SK-N-SH (cell line): ENCODE measurements at regions of chr7 and their contacts with region 1.

Region 1: DNA sequence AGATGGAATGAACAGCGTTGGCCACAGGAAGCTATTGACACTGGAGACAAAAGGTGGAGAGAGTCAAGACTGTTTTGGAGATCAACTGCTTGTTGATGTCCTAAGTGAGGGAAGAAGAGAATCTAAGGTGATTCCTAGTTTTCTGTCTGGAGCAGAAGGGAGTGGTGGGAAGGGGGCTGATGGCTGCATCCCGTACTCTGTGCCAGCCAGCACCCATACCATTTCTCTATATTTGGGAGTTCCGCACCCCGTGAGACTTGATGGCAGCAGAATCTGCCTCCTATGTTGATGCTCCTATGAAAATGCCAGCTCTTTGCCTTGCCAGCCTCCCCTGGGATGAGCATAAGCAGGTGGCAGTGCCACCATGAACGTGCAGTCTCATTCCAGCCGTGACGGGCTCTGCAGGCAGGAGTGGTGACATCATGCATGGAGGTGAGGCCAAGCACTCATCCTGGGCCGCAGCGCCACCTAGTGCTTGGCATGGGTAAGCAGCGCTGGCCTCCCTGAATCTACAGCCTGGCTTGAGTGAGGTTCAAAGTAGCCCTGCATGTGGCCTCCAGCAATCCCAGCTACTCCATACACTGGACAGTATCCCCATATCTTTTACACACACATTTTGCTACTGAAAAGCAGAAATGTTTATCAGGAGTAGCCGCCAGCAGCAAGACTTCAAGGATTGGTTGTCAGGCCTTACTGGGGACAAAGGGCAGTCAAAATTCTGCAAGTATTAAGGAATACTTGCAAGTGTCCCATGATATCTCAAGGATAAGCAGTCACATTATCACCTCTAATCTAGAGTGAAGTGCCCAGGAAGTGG is 43.0 kb downstream of the PODXL start:
- DNase-seq: peak; percentile 92
- H3K4me3 ChIP-seq: peak overlapping the region in 1 of 2 experiments; percentile 21; a peak in 2 of 4 replicates
- H3K27ac ChIP-seq: peak overlapping the region; percentile 2 to 41; a peak in 2 of 4 replicates
- H3K4me1 ChIP-seq: peaks cover 4 to 7% of the 10 kb centered on the region in 2 experiments; a peak in 2 of 4 replicates
- H3K27me3 ChIP-seq: no peaks in the 10 kb centered on the region
- CTCF ChIP-seq: peak; percentile 100
- EP300 ChIP-seq: no peak
- RAD21 ChIP-seq: peak; percentile 89

Region 2: GRCh38 chr7:131488361-131488760 is 25.1 kb before region 1 on chr7:
- CTCF ChIA-PET with region 1: interaction called, 91 read pairs
- POLR2A ChIA-PET with region 1: no interaction called
- DNase-seq: no peak
- H3K4me3 ChIP-seq: no peak overlapping the region
- H3K27ac ChIP-seq: peak overlapping the region in 1 of 2 experiments; percentile 2; a peak in 1 of 4 replicates
- H3K4me1 ChIP-seq: peaks cover 0 to 10% of the 10 kb centered on the region in 2 experiments; a peak in 2 of 4 replicates
- H3K27me3 ChIP-seq: no peaks in the 10 kb centered on the region
- CTCF ChIP-seq: peak; percentile 61
- EP300 ChIP-seq: no peak
- RAD21 ChIP-seq: no peak

Region 3: GRCh38 chr7:131527456-131527855 is 14.0 kb after region 1 on chr7:
- CTCF ChIA-PET with region 1: interaction called, 15 read pairs
- POLR2A ChIA-PET with region 1: no interaction called
- DNase-seq: no peak
- H3K4me3 ChIP-seq: no peak overlapping the region
- H3K27ac ChIP-seq: no peak overlapping the region
- H3K4me1 ChIP-seq: no peaks in the 10 kb centered on the region
- H3K27me3 ChIP-seq: no peaks in the 10 kb centered on the region
- CTCF ChIP-seq: no peak
- EP300 ChIP-seq: no peak
- RAD21 ChIP-seq: no peak

Region 4: DNA sequence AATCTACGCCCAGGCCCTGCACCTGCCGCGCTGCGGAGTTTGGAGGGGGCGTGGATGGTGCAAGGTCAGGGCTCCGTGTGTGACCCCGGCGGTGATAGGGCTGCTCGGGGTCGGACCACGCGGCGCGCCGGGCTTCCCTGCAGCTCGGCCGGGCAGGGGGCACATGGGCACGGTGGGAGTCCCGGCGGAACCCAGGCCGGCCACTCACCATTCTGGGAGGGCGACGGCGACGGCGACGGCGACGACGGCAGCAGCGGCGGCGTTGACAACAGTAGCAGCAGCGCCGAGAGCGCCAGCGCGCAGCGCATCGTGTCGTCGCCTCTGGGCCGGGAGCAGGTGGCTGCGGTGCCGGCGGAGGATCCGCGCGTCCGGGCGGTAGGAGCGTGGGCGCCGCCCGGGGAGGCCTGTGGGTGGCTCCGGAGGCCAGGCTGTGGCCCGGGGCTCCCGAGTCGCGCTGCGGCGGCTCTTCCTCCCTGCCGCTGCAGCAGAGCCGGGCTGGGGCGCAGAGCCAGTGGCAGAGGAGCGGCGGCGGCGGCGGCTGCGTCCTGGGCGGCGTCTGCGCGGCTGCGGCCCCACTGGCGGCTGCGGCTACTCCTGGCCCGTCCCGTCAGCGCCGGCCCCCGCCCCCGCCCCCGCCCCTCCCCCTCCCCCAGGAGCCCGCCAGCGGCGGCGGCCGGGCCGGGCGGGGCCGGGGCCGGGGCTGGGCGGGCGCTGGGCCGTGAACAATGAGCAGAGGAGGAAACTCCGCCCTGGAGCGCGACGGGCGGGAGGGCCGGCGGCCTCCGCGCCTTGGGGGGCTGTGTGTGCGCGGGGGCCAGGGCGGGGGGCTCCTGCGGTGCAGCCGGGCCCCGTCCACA is 42.8 kb after region 1 on chr7 and contains the start of gene PODXL:
- CTCF ChIA-PET with region 1: interaction called, 95 read pairs
- POLR2A ChIA-PET with region 1: no interaction called
- DNase-seq: peak; percentile 99
- H3K4me3 ChIP-seq: peak within 1 kb of the TSS; percentile 72 to 76
- H3K27ac ChIP-seq: peak within 1 kb of the TSS; percentile 44 to 62
- H3K4me1 ChIP-seq: peaks cover 10 to 34% of the 10 kb centered on the region in 2 experiments
- H3K27me3 ChIP-seq: no peaks in the 10 kb centered on the region
- CTCF ChIP-seq: no peak
- EP300 ChIP-seq: no peak
- RAD21 ChIP-seq: peak; percentile 25; the same call in 1 of the 2 replicates
- polyA plus RNA-seq, gene PODXL: 76.1 and 86.0 TPM in 2 replicates